ENCODE measurements at regions of chr9 and their contacts with region 1.

Region 1: DNA sequence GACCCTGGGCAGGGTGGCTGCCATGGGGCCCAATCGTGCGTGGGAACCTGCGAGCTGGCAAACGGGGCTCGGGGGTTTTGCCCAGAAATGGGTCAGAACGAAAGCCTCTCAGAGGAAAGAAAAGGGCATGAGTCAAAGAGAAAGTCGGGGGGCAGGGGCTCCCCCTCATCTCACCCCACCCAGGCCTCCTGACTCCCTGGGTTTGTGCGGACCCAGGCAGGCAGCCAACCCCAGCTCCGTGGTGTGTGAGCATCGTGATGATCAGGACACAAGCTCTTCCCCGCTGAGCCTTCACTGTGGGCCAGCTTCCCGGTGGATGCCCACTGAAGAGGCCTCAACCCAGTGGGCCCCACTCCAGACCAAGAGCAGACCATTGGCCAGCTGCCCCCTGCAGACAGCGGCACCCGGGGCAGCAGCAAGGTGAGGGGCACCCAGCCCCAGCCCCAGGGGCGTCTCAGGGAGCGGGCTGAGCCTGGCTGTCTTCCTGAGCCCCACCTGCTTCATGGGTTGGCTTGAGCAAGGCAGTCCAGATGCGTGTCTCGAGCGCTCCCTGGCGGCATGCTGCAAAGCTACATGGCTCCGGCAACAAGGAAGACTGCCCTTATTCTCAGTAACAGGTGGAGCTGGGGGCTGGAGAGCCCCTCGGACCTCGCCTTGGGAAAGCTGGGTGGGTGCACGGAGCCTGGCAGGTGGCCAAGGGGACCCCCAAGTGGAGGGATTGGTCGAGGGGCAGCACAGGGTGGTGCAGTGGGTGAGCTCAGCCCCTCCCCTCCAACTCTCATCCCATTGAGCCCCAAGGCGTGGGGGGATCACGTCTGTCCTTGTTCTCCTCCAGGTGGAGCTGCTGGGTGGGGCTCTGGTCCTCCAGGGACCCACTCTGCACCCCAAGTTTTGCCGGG is 3.2 kb upstream of the FUT7 start:
- DNase-seq: peak; percentile 73 to 94
- H3K4me3 ChIP-seq: no peak overlapping the region; a peak in 1 of 8 replicates
- H3K27ac ChIP-seq: no peak overlapping the region
- H3K4me1 ChIP-seq: peaks cover 0 to 2% (median 0%) of the 10 kb centered on the region in 4 experiments; a peak in 3 of 7 replicates
- H3K27me3 ChIP-seq: no peaks in the 10 kb centered on the region; a peak in 3 of 7 replicates
- CTCF ChIP-seq: peak in 2 of 3 experiments; percentile 93 to 95; a peak in 3 of 4 replicates
- EP300 ChIP-seq: no peak
- POLR2A ChIP-seq: no peak
- RAD21 ChIP-seq: peak; percentile 87 to 90

Region 2: DNA sequence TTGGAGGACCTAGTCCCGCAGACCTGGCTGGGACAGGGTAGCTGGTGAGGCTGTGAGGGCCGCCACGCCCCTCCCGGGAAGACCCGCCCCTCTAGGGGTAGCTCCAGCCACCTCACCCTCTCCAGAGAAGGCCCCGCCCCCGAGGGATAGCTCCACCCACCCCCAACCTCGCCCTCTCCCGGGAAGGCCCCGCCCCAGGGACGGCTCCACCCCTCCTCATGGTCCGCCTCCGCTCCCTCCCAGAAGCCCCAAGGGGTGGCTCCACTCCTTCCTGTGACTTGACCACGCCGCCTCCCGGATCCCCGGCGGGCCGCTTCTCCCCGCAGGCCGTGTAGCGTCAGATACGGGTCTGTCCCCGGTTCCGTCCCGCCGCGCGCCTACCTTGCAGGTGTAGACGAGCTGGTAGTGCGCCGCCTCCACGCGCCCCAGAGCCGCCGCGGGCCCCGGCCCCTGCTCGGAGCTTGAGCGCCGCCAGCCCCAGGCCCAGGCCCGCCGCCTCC is 672.0 kb before region 1 on chr9:
- CTCF ChIA-PET with region 1: no interaction called
- POLR2A ChIA-PET with region 1: no interaction called
- DNase-seq: peak; percentile 89 to 99
- H3K4me3 ChIP-seq: peak overlapping the region; percentile 71 to 97 (median 80)
- H3K27ac ChIP-seq: peak overlapping the region; percentile 75; the same call in 1 of the 2 replicates
- H3K4me1 ChIP-seq: peaks cover 0 to 8% (median under 1%) of the 10 kb centered on the region in 4 experiments; a peak in 3 of 7 replicates
- H3K27me3 ChIP-seq: peaks cover 0 to 2% (median 0%) of the 10 kb centered on the region in 4 experiments; a peak in 2 of 7 replicates
- CTCF ChIP-seq: no peak
- EP300 ChIP-seq: no peak
- POLR2A ChIP-seq: peak in 1 of 2 experiments; percentile 79; a peak in 2 of 3 replicates
- RAD21 ChIP-seq: no peak

Region 3: GRCh38 chr9:136965771-136966484 is 69.2 kb before region 1 on chr9:
- CTCF ChIA-PET with region 1: interaction called, 38 read pairs
- POLR2A ChIA-PET with region 1: no interaction called
- DNase-seq: no peak
- H3K4me3 ChIP-seq: no peak overlapping the region
- H3K27ac ChIP-seq: no peak overlapping the region
- H3K4me1 ChIP-seq: peaks cover 0 to 7% (median 5%) of the 10 kb centered on the region in 4 experiments; a peak in 4 of 7 replicates
- H3K27me3 ChIP-seq: no peaks in the 10 kb centered on the region
- CTCF ChIP-seq: no peak
- EP300 ChIP-seq: no peak
- POLR2A ChIP-seq: no peak
- RAD21 ChIP-seq: no peak

Region 4: GRCh38 chr9:137000177-137000883 is 34.8 kb before region 1 on chr9:
- CTCF ChIA-PET with region 1: interaction called, 29 read pairs
- POLR2A ChIA-PET with region 1: no interaction called
- DNase-seq: no peak
- H3K4me3 ChIP-seq: no peak overlapping the region
- H3K27ac ChIP-seq: no peak overlapping the region
- H3K4me1 ChIP-seq: peaks cover 0 to 16% (median 8%) of the 10 kb centered on the region in 4 experiments; a peak in 6 of 7 replicates
- H3K27me3 ChIP-seq: no peaks in the 10 kb centered on the region; a peak in 1 of 7 replicates
- CTCF ChIP-seq: no peak
- EP300 ChIP-seq: no peak
- POLR2A ChIP-seq: no peak
- RAD21 ChIP-seq: no peak

Region 5: DNA sequence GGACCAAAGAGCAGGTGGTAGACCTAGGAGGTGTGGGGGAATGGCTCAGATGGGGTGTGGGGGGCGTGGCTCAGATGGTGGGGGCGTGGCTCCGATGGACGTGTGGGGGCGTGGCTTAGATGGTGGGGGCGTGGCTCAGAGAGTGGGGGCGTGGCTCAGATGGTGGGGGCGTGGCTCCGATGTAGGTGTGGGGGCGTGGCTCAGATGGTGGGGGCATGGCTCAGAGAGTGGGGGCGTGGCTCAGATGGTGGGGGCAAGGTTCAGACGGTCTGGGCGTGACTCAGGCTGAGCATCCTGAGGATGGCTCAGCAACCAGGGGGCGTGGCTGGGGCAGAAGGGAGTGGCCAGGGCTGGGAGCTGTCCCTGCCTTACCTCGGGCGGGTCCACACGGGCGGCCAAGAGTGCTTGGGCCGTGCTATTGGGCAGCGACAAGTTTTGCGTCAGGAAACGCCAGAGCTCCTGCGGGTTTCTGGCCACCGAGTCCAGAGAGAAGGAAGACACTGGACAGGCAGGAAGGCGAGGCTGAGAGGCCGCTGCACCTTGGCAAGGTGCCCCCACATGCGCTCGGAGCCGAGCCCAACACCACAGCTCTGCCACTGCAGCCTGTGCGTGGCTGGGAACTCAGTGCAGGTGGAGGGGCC is 13.0 kb before region 1 on chr9:
- CTCF ChIA-PET with region 1: interaction called, 54 read pairs
- POLR2A ChIA-PET with region 1: no interaction called
- DNase-seq: peak; percentile 90 to 95
- H3K4me3 ChIP-seq: no peak overlapping the region
- H3K27ac ChIP-seq: no peak overlapping the region
- H3K4me1 ChIP-seq: peaks cover 0 to 9% (median 3%) of the 10 kb centered on the region in 4 experiments; a peak in 4 of 7 replicates
- H3K27me3 ChIP-seq: peaks cover 0 to 9% (median 4%) of the 10 kb centered on the region in 4 experiments; a peak in 5 of 7 replicates
- CTCF ChIP-seq: no peak
- EP300 ChIP-seq: no peak
- POLR2A ChIP-seq: no peak
- RAD21 ChIP-seq: no peak

Region 6: DNA sequence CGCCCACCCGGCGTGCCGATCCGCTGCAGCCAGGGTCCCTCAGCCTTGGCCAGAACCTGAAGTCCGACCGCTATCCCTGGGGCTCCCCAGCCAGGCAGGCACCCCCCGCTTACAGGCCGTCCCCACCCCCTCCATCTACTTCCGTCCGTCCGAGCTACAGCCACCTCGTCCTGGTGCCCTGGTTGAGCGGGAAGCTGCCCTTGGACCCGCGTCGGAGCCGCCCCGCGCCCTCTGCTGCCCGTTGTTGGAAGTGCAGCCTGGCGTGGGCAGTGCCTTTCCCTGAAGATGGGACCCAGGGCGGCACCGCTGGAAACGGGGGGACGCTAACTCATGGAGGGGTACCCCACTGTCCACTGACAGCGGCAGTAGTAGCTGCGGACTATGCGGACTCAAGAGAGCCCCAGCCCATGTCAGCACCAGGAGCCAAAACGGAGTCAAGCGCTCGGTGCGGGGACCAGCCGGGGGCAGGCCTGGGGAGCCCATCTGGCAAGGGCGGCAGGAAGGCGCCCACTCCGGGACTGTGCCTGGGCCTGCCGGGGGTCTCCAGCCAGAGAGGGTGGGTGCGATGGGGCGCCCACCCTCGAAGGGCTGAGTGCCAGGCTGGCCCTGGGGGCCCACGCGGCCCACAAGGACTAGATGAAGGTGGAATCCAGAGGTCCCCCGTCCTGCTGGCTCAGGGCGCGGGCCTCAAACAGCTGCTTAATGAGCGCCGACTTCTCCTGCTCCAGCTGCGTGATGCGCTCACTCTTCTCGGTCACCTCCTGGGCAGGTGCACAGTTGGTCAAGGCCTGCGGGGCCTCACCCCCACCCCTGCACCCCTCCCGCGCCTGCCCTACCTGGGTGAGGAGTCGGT is 29.1 kb after region 1 on chr9:
- CTCF ChIA-PET with region 1: interaction called, 110 read pairs
- POLR2A ChIA-PET with region 1: interaction called, 5 read pairs
- DNase-seq: peak in 1 of 2 experiments; percentile 95
- H3K4me3 ChIP-seq: no peak overlapping the region
- H3K27ac ChIP-seq: no peak overlapping the region
- H3K4me1 ChIP-seq: peaks cover 0 to 13% (median 7%) of the 10 kb centered on the region in 4 experiments; a peak in 5 of 7 replicates
- H3K27me3 ChIP-seq: peaks cover 0 to 8% (median 2%) of the 10 kb centered on the region in 4 experiments; a peak in 5 of 7 replicates
- CTCF ChIP-seq: peak in 2 of 3 experiments; percentile 88 to 95; a peak in 3 of 4 replicates
- EP300 ChIP-seq: no peak
- POLR2A ChIP-seq: no peak
- RAD21 ChIP-seq: peak; percentile 61 to 72

Region 7: GRCh38 chr9:137178201-137178938 is 143.3 kb after region 1 on chr9:
- CTCF ChIA-PET with region 1: no interaction called
- POLR2A ChIA-PET with region 1: no interaction called
- DNase-seq: no peak
- H3K4me3 ChIP-seq: no peak overlapping the region
- H3K27ac ChIP-seq: no peak overlapping the region
- H3K4me1 ChIP-seq: peaks cover 0 to 8% (median 3%) of the 10 kb centered on the region in 4 experiments; a peak in 5 of 7 replicates
- H3K27me3 ChIP-seq: no peaks in the 10 kb centered on the region; a peak in 3 of 7 replicates
- CTCF ChIP-seq: no peak
- EP300 ChIP-seq: no peak
- POLR2A ChIP-seq: no peak
- RAD21 ChIP-seq: no peak

Region 8: GRCh38 chr9:137383081-137383889 is 348.2 kb after region 1 on chr9:
- CTCF ChIA-PET with region 1: no interaction called
- POLR2A ChIA-PET with region 1: no interaction called
- DNase-seq: peak in 1 of 2 experiments; percentile 50
- H3K4me3 ChIP-seq: no peak overlapping the region
- H3K27ac ChIP-seq: no peak overlapping the region
- H3K4me1 ChIP-seq: no peaks in the 10 kb centered on the region; a peak in 1 of 7 replicates
- H3K27me3 ChIP-seq: no peaks in the 10 kb centered on the region
- CTCF ChIP-seq: no peak
- EP300 ChIP-seq: no peak
- POLR2A ChIP-seq: no peak
- RAD21 ChIP-seq: no peak

Measured in H1 (cell line).